Activated B cell treated with CpG ODN at 0.5 μM for 24 hours (primary cell): ENCODE measurements at regions of chr19 and their contacts with region 1.

Region 1: GRCh38 chr19:56507446-56508289 is at the start of gene ZNF471:
- DNase-seq: peak; percentile 81
- ATAC-seq: peak; percentile 99
- H3K4me3 Mint-ChIP-seq: no peak within 1 kb of the TSS
- H3K27ac Mint-ChIP-seq: no peak within 1 kb of the TSS
- H3K4me1 Mint-ChIP-seq: peaks cover 9% of the 10 kb centered on the region
- H3K27me3 Mint-ChIP-seq: no peaks in the 10 kb centered on the region
- CTCF ChIP-seq: no peak
- total RNA-seq, gene ZNF471: 1.8 and 2.1 TPM in 2 replicates

Region 2: GRCh38 chr19:56567274-56568120 is 59.8 kb after region 1 on chr19 and contains the start of gene ZNF470:
- CTCF ChIA-PET with region 1: no interaction called
- POLR2A ChIA-PET with region 1: no interaction called
- intact Hi-C with region 1: loop called (anchors 2 kb)
- DNase-seq: peak; percentile 86
- ATAC-seq: peak; percentile 98
- H3K4me3 Mint-ChIP-seq: peak within 1 kb of the TSS; percentile 96
- H3K27ac Mint-ChIP-seq: peak within 1 kb of the TSS; percentile 88
- H3K4me1 Mint-ChIP-seq: peaks cover 15% of the 10 kb centered on the region
- H3K27me3 Mint-ChIP-seq: no peaks in the 10 kb centered on the region
- CTCF ChIP-seq: no peak
- total RNA-seq, gene ZNF470: 5.9 and 6.4 TPM in 2 replicates